Activated CD4-positive, alpha-beta T cell treated with anti-CD3 and anti-CD28 coated beads for 36 hours (primary cell): ENCODE measurements at regions of chr4 and their contacts with region 1.

Region 1: DNA sequence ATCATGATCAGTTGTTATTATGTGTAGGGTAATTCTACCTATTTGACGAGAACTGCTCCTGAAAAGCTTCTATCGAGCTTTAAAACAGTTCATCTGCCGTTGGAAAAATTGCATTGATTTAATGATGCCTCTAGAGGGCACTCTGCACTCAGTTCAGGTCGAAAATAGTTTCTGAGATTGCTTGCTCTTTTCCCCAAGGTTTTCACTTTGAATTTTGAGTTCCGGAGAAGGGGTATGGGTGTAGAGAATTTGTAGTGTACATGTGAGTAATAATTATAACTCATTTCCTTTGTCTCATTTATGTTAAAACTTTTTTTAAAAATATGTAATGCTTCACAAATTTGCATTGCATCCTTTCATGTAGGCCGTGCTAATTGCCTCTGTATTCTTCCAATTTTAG is 28.4 kb upstream of the TNIP3 start:
- DNase-seq: peak; percentile 27
- ATAC-seq: peak; percentile 50
- H3K4me3 Mint-ChIP-seq: peak overlapping the region; percentile 42
- H3K27ac Mint-ChIP-seq: no peak overlapping the region
- H3K4me1 Mint-ChIP-seq: peaks cover 59% of the 10 kb centered on the region
- H3K27me3 Mint-ChIP-seq: no peaks in the 10 kb centered on the region

Region 2: GRCh38 chr4:121118344-121118743 is 74.1 kb before region 1 on chr4:
- CTCF ChIA-PET with region 1: interaction called, 10 read pairs
- POLR2A ChIA-PET with region 1: no interaction called
- intact Hi-C with region 1: no loop called
- DNase-seq: no peak
- ATAC-seq: no peak
- H3K4me3 Mint-ChIP-seq: no peak overlapping the region
- H3K27ac Mint-ChIP-seq: no peak overlapping the region
- H3K4me1 Mint-ChIP-seq: peaks cover 22% of the 10 kb centered on the region
- H3K27me3 Mint-ChIP-seq: no peaks in the 10 kb centered on the region

Region 3: GRCh38 chr4:121219227-121219626 is 26.7 kb after region 1 on chr4:
- CTCF ChIA-PET with region 1: interaction called, 26 read pairs
- POLR2A ChIA-PET with region 1: no interaction called
- intact Hi-C with region 1: no loop called
- DNase-seq: no peak
- ATAC-seq: no peak
- H3K4me3 Mint-ChIP-seq: no peak overlapping the region
- H3K27ac Mint-ChIP-seq: no peak overlapping the region
- H3K4me1 Mint-ChIP-seq: peaks cover 22% of the 10 kb centered on the region
- H3K27me3 Mint-ChIP-seq: no peaks in the 10 kb centered on the region

Region 4: DNA sequence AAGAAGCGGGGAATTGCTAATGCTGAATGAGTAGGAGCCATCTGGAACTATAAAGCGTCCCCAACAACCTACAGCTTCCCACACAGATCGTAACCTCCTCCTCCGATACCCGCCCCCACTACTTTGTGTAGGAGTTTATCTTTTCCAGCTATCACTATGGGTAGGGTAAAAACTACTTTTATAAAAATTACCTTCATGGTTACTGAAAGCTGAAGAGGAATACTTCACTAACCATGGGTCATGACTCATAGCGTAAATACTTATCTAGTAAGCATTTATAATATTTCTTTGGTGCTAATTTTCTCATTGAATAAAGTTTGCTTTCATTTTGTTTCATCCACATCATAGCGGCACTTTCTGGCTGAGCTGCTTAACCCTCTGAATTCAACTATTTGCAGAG is 51.0 kb after region 1 on chr4:
- CTCF ChIA-PET with region 1: interaction called, 11 read pairs
- POLR2A ChIA-PET with region 1: no interaction called
- intact Hi-C with region 1: no loop called
- DNase-seq: peak; percentile 25
- ATAC-seq: peak; percentile 71
- H3K4me3 Mint-ChIP-seq: no peak overlapping the region
- H3K27ac Mint-ChIP-seq: no peak overlapping the region
- H3K4me1 Mint-ChIP-seq: peaks cover 27% of the 10 kb centered on the region
- H3K27me3 Mint-ChIP-seq: no peaks in the 10 kb centered on the region

Region 5: DNA sequence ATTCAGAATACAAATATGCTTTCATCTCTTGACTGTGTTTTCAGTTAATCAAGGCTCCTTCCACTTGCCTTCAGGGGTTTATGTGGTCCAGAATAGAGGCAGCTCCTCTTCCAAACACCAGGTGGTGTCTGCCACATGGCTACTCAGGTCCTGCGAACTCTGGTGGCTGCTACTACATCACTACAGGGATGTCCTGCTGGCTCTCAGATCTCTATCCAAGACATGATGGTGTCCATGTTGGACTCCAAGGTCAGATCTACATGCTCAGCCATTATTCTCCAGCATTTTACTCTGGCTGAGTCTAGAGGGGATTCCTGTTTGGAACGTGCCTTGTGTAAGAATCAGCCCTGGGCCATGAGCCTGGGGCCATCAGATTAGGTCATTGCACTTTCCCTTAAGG is 85.1 kb after region 1 on chr4:
- CTCF ChIA-PET with region 1: interaction called, 4 read pairs
- POLR2A ChIA-PET with region 1: no interaction called
- intact Hi-C with region 1: loop called in 1 of 2 experiments (anchors 1 kb)
- DNase-seq: peak; percentile 19
- ATAC-seq: no peak
- H3K4me3 Mint-ChIP-seq: no peak overlapping the region
- H3K27ac Mint-ChIP-seq: no peak overlapping the region
- H3K4me1 Mint-ChIP-seq: peaks cover 22% of the 10 kb centered on the region
- H3K27me3 Mint-ChIP-seq: peaks cover 19% of the 10 kb centered on the region

Region 6: DNA sequence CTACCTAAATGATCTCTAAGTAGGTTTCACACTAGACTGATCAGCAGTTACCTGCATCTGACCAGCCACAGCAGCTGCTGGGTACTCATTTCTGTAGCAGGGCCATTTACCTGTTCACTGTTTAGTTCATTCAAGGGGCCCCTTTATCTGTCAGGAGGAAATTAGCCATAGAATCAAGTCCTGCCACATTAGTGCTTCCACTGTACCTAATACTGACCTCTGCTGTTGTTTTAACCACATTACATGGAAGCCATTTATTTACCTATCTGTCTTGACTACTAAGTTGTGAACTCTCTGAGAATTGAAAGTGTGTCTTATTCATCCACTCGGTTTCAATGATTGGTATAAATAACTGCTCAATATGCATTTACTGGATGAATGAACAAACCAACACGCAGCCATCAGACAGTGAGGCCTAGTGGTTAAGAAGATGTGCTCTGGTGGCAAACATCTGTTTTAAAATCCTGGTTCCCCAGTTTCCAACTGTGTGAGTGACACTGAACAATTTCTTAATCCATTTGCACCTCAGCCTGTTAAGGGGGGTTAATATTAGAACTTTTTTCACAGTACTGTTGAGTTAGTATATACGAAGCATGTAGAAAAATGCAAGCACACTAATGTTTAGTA is 534.3 kb after region 1 on chr4:
- CTCF ChIA-PET with region 1: no interaction called
- POLR2A ChIA-PET with region 1: no interaction called
- intact Hi-C with region 1: loop called in 1 of 2 experiments (anchors 5 kb)
- DNase-seq: peak; percentile 30
- ATAC-seq: peak; percentile 91
- H3K4me3 Mint-ChIP-seq: no peak overlapping the region
- H3K27ac Mint-ChIP-seq: no peak overlapping the region
- H3K4me1 Mint-ChIP-seq: peaks cover 8% of the 10 kb centered on the region
- H3K27me3 Mint-ChIP-seq: peaks cover 4% of the 10 kb centered on the region